ENCODE measurements at regions of chr11 and their contacts with region 1.

Region 1: GRCh38 chr11:67433536-67434394 is 3.7 kb downstream of the PTPRCAP start:
- DNase-seq: no peak
- H3K4me3 ChIP-seq: no peak overlapping the region
- H3K27ac ChIP-seq: no peak overlapping the region
- H3K4me1 ChIP-seq: peaks cover 2% of the 10 kb centered on the region
- H3K27me3 ChIP-seq: no peaks in the 10 kb centered on the region
- CTCF ChIP-seq: no peak
- EP300 ChIP-seq: no peak
- POLR2A ChIP-seq: no peak

Region 2: GRCh38 chr11:66136752-66137123 is 1297.0 kb before region 1 on chr11:
- intact Hi-C with region 1: loop called in 1 of 4 experiments (anchors 5 kb)
- DNase-seq: no peak
- H3K4me3 ChIP-seq: no peak overlapping the region
- H3K27ac ChIP-seq: no peak overlapping the region
- H3K4me1 ChIP-seq: no peaks in the 10 kb centered on the region
- H3K27me3 ChIP-seq: no peaks in the 10 kb centered on the region
- CTCF ChIP-seq: no peak
- EP300 ChIP-seq: no peak
- POLR2A ChIP-seq: no peak

Region 3: GRCh38 chr11:67265633-67266423 is 167.9 kb before region 1 on chr11:
- intact Hi-C with region 1: no loop called
- DNase-seq: peak; percentile 70 to 90 (median 82)
- H3K4me3 ChIP-seq: peak overlapping the region; percentile 16
- H3K27ac ChIP-seq: peak overlapping the region; percentile 67 to 72
- H3K4me1 ChIP-seq: peaks cover 25% of the 10 kb centered on the region
- H3K27me3 ChIP-seq: no peaks in the 10 kb centered on the region
- CTCF ChIP-seq: peak; percentile 59 to 93 (median 91)
- EP300 ChIP-seq: no peak
- POLR2A ChIP-seq: no peak

Measured in ovary (tissue), 10 donors.